ENCODE measurements at regions of chr3 and their contacts with region 1.

Region 1: GRCh38 chr3:49120438-49121131 is at the start of gene USP19:
- H3K4me3 Mint-ChIP-seq: peak within 1 kb of the TSS; percentile 80
- H3K27ac Mint-ChIP-seq: peak within 1 kb of the TSS; percentile 82
- H3K4me1 Mint-ChIP-seq: peaks cover 28% of the 10 kb centered on the region
- H3K27me3 Mint-ChIP-seq: no peaks in the 10 kb centered on the region

Region 2: GRCh38 chr3:48776854-48777253 is 343.7 kb before region 1 on chr3:
- intact Hi-C with region 1: no loop called
- H3K4me3 Mint-ChIP-seq: no peak overlapping the region
- H3K27ac Mint-ChIP-seq: no peak overlapping the region
- H3K4me1 Mint-ChIP-seq: no peaks in the 10 kb centered on the region
- H3K27me3 Mint-ChIP-seq: no peaks in the 10 kb centered on the region

Region 3: GRCh38 chr3:49104483-49105291 is 15.9 kb before region 1 on chr3 and contains the start of gene QARS1:
- intact Hi-C with region 1: loop called (anchors 1 kb)
- H3K4me3 Mint-ChIP-seq: peak within 1 kb of the TSS; percentile 98
- H3K27ac Mint-ChIP-seq: peak within 1 kb of the TSS; percentile 96
- H3K4me1 Mint-ChIP-seq: peaks cover 30% of the 10 kb centered on the region
- H3K27me3 Mint-ChIP-seq: no peaks in the 10 kb centered on the region